Ovary (tissue), 10 donors: ENCODE measurements at regions of chrX and their contacts with region 1.

Region 1: GRCh38 chrX:102514536-102514935 is 2.0 kb downstream of the TMSB15A start:
- DNase-seq: no peak
- H3K4me3 ChIP-seq: no peak overlapping the region
- H3K27ac ChIP-seq: no peak overlapping the region
- H3K4me1 ChIP-seq: no peaks in the 10 kb centered on the region
- H3K27me3 ChIP-seq: no peaks in the 10 kb centered on the region
- CTCF ChIP-seq: no peak
- EP300 ChIP-seq: no peak
- POLR2A ChIP-seq: no peak

Region 2: GRCh38 chrX:102154900-102155805 is 359.4 kb before region 1 on chrX:
- intact Hi-C with region 1: loop called in 1 of 4 experiments (anchors 5 kb)
- DNase-seq: peak; percentile 26 to 43 (median 30)
- H3K4me3 ChIP-seq: peak overlapping the region; percentile 35
- H3K27ac ChIP-seq: peak overlapping the region; percentile 62 to 65
- H3K4me1 ChIP-seq: no peaks in the 10 kb centered on the region
- H3K27me3 ChIP-seq: no peaks in the 10 kb centered on the region
- CTCF ChIP-seq: no peak
- EP300 ChIP-seq: no peak
- POLR2A ChIP-seq: no peak